PC-9 (cell line): ENCODE measurements at regions of chr6 and their contacts with region 1.

Region 1: DNA sequence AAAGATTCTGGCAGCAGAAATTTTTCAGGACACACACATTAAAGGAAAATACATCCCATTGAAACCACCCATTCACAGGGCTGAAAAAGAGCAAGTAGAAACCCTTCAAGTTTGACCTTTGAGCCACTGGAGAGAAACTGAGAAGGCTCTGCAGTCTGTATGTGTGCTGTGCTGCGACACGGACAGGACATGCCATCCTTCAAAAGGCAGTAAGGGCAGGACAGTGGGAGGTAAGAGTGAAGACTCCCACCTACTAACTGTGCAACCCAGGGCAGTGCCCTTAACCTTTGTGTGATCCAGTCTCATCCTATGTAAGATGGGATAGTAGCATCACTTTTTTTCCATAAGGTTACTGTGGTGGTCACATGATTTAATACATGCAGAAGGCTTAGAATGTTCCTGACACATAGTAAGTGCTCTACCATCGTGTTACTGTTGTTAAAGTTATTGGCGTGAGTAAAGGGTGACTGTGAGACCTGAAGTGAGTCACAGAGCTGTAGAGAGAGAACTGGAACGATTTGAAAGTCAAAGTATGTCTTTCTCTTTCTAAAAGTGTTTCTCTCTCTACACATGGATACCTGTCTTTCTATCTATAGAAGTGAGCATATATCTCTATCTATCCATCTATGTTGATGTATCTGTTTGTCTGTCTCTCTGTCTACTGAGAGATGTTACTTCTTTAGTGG is 153.7 kb upstream of the OLIG3 start:
- DNase-seq: peak in 1 of 2 experiments; percentile 53
- H3K4me3 ChIP-seq: no peak overlapping the region
- H3K27ac ChIP-seq: peak overlapping the region; percentile 54
- H3K4me1 ChIP-seq: peaks cover 36% of the 10 kb centered on the region
- H3K27me3 ChIP-seq: no peaks in the 10 kb centered on the region
- CTCF ChIP-seq: no peak

Region 2: GRCh38 chr6:137332637-137333280 is 315.1 kb before region 1 on chr6:
- CTCF ChIA-PET with region 1: no interaction called
- POLR2A ChIA-PET with region 1: no interaction called
- intact Hi-C with region 1: no loop called
- DNase-seq: peak in 1 of 2 experiments; percentile 22
- H3K4me3 ChIP-seq: no peak overlapping the region
- H3K27ac ChIP-seq: no peak overlapping the region
- H3K4me1 ChIP-seq: no peaks in the 10 kb centered on the region
- H3K27me3 ChIP-seq: no peaks in the 10 kb centered on the region
- CTCF ChIP-seq: no peak

Region 3: DNA sequence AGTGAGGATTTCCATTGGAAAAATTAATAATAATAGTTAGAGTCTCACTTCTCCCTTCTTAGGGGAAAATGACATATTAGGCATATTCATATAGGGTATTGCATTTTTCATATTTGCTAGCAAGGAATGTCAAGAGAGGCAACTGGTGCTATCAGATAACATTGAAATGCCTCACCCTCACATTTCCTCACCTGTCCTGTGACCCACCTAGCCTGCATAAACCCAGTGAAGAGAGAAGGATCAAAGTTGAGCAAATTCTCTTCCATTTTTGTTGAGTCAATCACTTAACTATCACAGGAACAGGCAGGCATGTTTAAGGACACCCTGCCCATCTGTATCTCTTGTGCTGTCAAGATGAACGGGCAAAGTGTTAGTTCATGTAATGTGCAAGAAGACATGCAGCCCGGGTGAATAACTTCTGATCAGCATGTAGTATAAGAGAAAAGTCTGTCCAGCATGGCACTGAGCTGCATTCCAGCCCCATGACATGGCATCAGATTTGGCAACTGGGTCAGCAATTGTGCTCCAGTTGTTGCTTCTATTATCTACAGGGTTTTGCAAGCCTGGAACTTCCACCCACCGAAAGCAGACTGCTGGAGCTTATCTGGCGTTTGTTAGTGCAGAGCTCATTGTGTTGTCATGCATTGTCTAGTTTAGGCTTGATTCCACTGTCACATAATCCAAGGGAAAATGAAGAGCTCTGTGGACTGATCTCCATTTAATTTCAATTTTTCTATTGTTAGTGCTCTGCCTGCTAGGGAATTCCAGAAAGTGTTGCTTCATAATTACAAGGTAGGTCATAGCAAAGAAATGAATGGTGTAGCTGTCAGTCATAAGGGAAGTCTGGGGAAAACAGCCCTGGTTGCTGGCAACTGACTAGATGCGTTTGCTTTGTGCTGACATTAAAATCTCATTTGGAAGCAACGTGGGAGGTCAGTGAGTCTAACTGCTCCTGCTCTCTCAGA is 80.8 kb after region 1 on chr6:
- CTCF ChIA-PET with region 1: no interaction called
- POLR2A ChIA-PET with region 1: no interaction called
- intact Hi-C with region 1: no loop called
- DNase-seq: peak; percentile 74 to 93
- H3K4me3 ChIP-seq: peak overlapping the region; percentile 4; the same call in 1 of the 2 replicates
- H3K27ac ChIP-seq: peak overlapping the region; percentile 63
- H3K4me1 ChIP-seq: peaks cover 72% of the 10 kb centered on the region
- H3K27me3 ChIP-seq: no peaks in the 10 kb centered on the region
- CTCF ChIP-seq: no peak

Region 4: DNA sequence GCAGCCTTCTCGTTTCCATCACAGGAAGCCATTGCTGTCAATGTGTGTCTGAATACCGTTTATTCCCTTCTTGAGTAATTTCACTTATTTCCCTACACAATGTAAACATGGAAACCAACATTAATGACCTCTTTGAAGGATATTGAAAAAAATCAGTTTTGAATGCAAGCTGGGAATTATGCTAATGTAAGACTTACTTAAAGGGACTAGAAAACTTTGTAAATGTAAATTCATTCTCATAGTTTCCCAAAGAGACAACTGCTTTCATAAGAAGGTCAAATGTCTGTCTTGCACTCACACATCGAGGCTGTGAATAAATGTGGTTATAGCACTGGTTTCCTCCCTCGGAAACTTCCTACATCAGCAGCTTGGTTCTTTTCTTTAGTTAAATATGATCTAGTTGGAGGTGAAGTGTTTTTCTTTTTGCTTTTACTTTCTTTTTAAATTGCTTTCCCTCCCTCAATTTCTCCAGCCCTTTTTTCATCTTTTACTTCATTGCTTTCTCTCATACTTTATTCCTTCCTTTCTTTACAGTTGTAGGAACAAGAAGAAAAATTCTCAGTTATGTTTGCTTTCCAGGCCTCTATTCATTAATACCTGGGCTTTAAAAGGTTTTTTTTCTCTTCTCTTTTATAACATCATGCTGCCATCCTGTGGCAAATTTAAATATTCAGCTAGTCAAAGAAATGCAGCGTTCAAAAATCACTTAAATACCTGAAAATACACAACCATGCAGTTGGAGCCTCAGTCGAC is 327.5 kb after region 1 on chr6:
- CTCF ChIA-PET with region 1: no interaction called
- POLR2A ChIA-PET with region 1: no interaction called
- intact Hi-C with region 1: loop called (anchors 5 kb)
- DNase-seq: no peak
- H3K4me3 ChIP-seq: no peak overlapping the region
- H3K27ac ChIP-seq: no peak overlapping the region
- H3K4me1 ChIP-seq: peaks cover 36% of the 10 kb centered on the region
- H3K27me3 ChIP-seq: no peaks in the 10 kb centered on the region
- CTCF ChIP-seq: peak; percentile 77